B cell (primary cell): ENCODE measurements at regions of chr22 and their contacts with region 1.

Region 1: GRCh38 chr22:49960159-49961004 is at the start of gene PIM3:
- DNase-seq: peak; percentile 98
- ATAC-seq: peak; percentile 78
- H3K4me3 ChIP-seq: peak within 1 kb of the TSS; percentile 65 to 88 (median 77)
- H3K4me3 Mint-ChIP-seq: peak within 1 kb of the TSS; percentile 91
- H3K27ac ChIP-seq: peak within 1 kb of the TSS; percentile 85 to 94
- H3K27ac Mint-ChIP-seq: peak within 1 kb of the TSS; percentile 91
- H3K4me1 ChIP-seq: peaks cover 22 to 36% of the 10 kb centered on the region in 2 donors
- H3K4me1 Mint-ChIP-seq: peaks cover 38% of the 10 kb centered on the region
- H3K27me3 ChIP-seq: no peaks in the 10 kb centered on the region
- H3K27me3 Mint-ChIP-seq: no peaks in the 10 kb centered on the region
- CTCF ChIP-seq: no peak
- total RNA-seq, gene PIM3: 127 and 128 TPM in 2 replicates

Region 2: GRCh38 chr22:49992921-49993648 is 32.7 kb after region 1 on chr22:
- CTCF ChIA-PET with region 1: interaction called, 14 read pairs
- POLR2A ChIA-PET with region 1: interaction called, 5 read pairs
- intact Hi-C with region 1: no loop called
- DNase-seq: peak; percentile 82
- ATAC-seq: peak; percentile 96
- H3K4me3 ChIP-seq: no peak overlapping the region
- H3K4me3 Mint-ChIP-seq: peak overlapping the region; percentile 51
- H3K27ac ChIP-seq: no peak overlapping the region
- H3K27ac Mint-ChIP-seq: peak overlapping the region; percentile 82
- H3K4me1 ChIP-seq: peaks cover 11 to 24% of the 10 kb centered on the region in 2 donors
- H3K4me1 Mint-ChIP-seq: peaks cover 15% of the 10 kb centered on the region
- H3K27me3 ChIP-seq: no peaks in the 10 kb centered on the region
- H3K27me3 Mint-ChIP-seq: no peaks in the 10 kb centered on the region
- CTCF ChIP-seq: peak; percentile 87

Region 3: DNA sequence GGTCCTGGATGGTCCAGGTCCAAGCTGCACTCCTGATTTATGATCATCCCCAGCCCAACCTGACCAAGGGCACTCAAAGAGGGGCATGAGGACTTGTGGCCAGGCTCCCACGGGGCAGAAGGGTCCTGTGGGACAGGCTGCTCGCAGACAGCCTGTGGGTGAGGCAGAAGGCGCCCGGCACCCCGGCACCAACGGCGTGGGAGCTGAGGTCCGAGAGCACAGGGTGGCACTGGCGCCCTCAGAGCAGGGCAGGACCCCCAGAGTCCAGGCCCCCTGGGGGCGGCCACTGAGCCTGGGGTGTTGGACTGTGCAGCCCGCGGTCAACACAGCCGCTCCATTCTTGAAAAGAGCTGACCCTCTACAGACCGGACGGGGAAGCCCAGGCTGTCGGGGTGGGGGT is 48.9 kb after region 1 on chr22:
- CTCF ChIA-PET with region 1: no interaction called
- POLR2A ChIA-PET with region 1: no interaction called
- intact Hi-C with region 1: no loop called
- DNase-seq: peak; percentile 21
- ATAC-seq: no peak
- H3K4me3 ChIP-seq: no peak overlapping the region
- H3K4me3 Mint-ChIP-seq: peak overlapping the region; percentile 56
- H3K27ac ChIP-seq: no peak overlapping the region
- H3K27ac Mint-ChIP-seq: peak overlapping the region; percentile 76
- H3K4me1 ChIP-seq: peaks cover 27 to 30% of the 10 kb centered on the region in 2 donors
- H3K4me1 Mint-ChIP-seq: peaks cover 29% of the 10 kb centered on the region
- H3K27me3 ChIP-seq: peaks cover 0 to 14% (median 7%) of the 10 kb centered on the region in 4 experiments
- H3K27me3 Mint-ChIP-seq: no peaks in the 10 kb centered on the region
- CTCF ChIP-seq: no peak